MCF 10A (cell line): ENCODE measurements at regions of chr7 and their contacts with region 1.

Region 1: GRCh38 chr7:129218514-129219062 is 6.2 kb upstream of the AHCYL2 start:
- DNase-seq: peak; percentile 91
- H3K4me3 Mint-ChIP-seq: no peak overlapping the region
- H3K27ac Mint-ChIP-seq: no peak overlapping the region
- H3K4me1 Mint-ChIP-seq: no peaks in the 10 kb centered on the region
- H3K27me3 Mint-ChIP-seq: no peaks in the 10 kb centered on the region
- CTCF ChIP-seq: peak; percentile 85

Region 2: GRCh38 chr7:128247676-128248194 is 970.9 kb before region 1 on chr7:
- CTCF ChIA-PET with region 1: no interaction called
- POLR2A ChIA-PET with region 1: no interaction called
- intact Hi-C with region 1: no loop called
- DNase-seq: peak; percentile 58
- H3K4me3 Mint-ChIP-seq: no peak overlapping the region
- H3K27ac Mint-ChIP-seq: no peak overlapping the region
- H3K4me1 Mint-ChIP-seq: peaks cover 4% of the 10 kb centered on the region
- H3K27me3 Mint-ChIP-seq: no peaks in the 10 kb centered on the region
- CTCF ChIP-seq: no peak

Region 3: DNA sequence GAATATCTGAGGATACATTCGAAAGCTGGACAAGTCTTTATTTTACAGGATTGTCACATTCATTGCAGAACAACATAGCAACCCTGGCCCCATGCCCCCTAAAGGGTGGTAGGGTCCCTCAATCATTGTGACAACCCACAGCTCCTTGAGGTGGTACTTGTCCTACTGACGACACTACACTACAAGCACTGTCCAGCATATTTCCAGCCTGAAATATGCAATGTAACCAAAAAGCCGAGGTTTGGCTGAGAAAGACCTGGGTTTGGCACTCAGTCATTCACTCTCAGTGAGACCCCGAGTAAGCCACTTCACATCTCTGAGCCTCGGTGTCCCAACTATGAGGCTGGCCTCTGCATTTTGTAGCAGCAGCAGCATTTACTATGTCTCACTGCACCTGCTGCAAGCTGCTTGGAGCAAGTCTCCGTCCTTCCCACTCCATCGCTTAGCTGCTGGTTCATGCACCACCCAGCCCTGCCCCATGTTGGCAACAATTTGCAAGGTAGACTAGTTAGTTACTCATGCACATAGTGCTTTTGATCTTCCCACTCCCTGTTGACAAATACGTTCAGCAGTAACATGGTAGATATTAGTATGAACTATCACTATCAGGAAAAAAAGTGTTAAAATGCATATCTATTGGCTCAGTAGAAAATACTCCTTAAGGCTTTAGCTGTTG is 120.0 kb before region 1 on chr7:
- CTCF ChIA-PET with region 1: no interaction called
- POLR2A ChIA-PET with region 1: no interaction called
- intact Hi-C with region 1: no loop called
- DNase-seq: no peak
- H3K4me3 Mint-ChIP-seq: no peak overlapping the region
- H3K27ac Mint-ChIP-seq: no peak overlapping the region
- H3K4me1 Mint-ChIP-seq: no peaks in the 10 kb centered on the region
- H3K27me3 Mint-ChIP-seq: no peaks in the 10 kb centered on the region
- CTCF ChIP-seq: no peak

Region 4: DNA sequence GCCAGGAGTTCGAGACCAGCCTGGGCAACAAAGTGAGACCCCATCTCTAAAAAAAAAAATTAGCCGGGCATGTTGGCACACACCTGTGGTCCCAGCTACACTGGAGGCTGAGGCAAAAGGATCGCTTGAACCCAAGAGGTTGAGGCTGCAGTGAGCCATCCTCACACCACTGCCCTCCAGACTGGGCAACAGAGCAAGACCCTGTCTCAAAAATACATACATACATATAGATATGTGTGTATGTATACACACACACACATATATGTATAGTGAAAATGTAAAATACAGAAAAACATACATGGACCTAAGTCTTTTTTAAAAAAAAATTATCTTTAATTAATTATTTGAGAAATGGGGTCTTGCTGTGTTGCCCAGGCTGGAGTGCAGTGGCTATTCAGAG is 24.7 kb before region 1 on chr7:
- CTCF ChIA-PET with region 1: interaction called, 10 read pairs
- POLR2A ChIA-PET with region 1: no interaction called
- intact Hi-C with region 1: no loop called
- DNase-seq: no peak
- H3K4me3 Mint-ChIP-seq: no peak overlapping the region
- H3K27ac Mint-ChIP-seq: no peak overlapping the region
- H3K4me1 Mint-ChIP-seq: no peaks in the 10 kb centered on the region
- H3K27me3 Mint-ChIP-seq: peaks cover 56% of the 10 kb centered on the region
- CTCF ChIP-seq: no peak

Region 5: GRCh38 chr7:129285111-129285510 is 66.5 kb after region 1 on chr7:
- CTCF ChIA-PET with region 1: interaction called, 14 read pairs
- POLR2A ChIA-PET with region 1: interaction called, 3 read pairs
- intact Hi-C with region 1: no loop called
- DNase-seq: no peak
- H3K4me3 Mint-ChIP-seq: no peak overlapping the region
- H3K27ac Mint-ChIP-seq: no peak overlapping the region
- H3K4me1 Mint-ChIP-seq: peaks cover 6% of the 10 kb centered on the region
- H3K27me3 Mint-ChIP-seq: no peaks in the 10 kb centered on the region
- CTCF ChIP-seq: no peak

Region 6: GRCh38 chr7:129343099-129343700 is 124.6 kb after region 1 on chr7:
- CTCF ChIA-PET with region 1: interaction called, 13 read pairs
- POLR2A ChIA-PET with region 1: no interaction called
- intact Hi-C with region 1: no loop called
- DNase-seq: peak; percentile 53
- H3K4me3 Mint-ChIP-seq: no peak overlapping the region
- H3K27ac Mint-ChIP-seq: no peak overlapping the region
- H3K4me1 Mint-ChIP-seq: peaks cover 7% of the 10 kb centered on the region
- H3K27me3 Mint-ChIP-seq: no peaks in the 10 kb centered on the region
- CTCF ChIP-seq: peak; percentile 56

Region 7: DNA sequence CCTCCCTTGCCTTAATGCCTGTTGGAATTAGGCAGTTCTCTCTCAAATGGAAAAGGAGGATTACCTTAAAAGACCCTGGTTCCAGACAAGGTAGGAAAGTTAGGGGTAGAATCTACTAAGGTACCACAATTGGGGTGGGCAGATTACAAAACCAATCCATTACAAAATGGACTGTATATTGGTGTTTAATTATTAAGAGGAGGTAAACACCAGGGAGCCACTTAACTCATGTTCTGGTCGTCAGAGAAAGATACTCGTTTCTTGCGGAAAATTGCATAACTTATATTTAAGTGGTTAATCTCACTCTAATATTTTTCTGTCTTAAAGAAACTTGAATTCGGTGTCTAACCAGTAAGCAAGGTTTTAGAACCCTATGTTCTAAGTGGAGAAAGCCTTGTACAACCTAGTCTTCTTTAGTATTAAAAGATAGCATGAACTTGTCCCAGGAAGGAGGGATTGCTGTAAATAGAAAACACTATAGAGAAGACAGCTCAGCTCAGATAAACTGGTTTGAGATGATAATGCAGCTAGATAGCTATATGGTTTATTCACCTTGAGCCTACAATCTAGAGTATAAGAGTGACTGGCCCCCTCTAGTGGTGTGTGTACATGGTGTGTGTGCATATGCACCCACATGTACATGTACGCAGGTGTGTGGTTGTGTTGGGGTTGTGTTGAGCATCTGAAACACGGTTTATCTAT is 157.6 kb after region 1 on chr7:
- CTCF ChIA-PET with region 1: interaction called, 71 read pairs
- POLR2A ChIA-PET with region 1: no interaction called
- intact Hi-C with region 1: loop called (anchors 2 kb)
- DNase-seq: peak; percentile 64
- H3K4me3 Mint-ChIP-seq: no peak overlapping the region
- H3K27ac Mint-ChIP-seq: no peak overlapping the region
- H3K4me1 Mint-ChIP-seq: no peaks in the 10 kb centered on the region
- H3K27me3 Mint-ChIP-seq: no peaks in the 10 kb centered on the region
- CTCF ChIP-seq: peak; percentile 49

Region 8: DNA sequence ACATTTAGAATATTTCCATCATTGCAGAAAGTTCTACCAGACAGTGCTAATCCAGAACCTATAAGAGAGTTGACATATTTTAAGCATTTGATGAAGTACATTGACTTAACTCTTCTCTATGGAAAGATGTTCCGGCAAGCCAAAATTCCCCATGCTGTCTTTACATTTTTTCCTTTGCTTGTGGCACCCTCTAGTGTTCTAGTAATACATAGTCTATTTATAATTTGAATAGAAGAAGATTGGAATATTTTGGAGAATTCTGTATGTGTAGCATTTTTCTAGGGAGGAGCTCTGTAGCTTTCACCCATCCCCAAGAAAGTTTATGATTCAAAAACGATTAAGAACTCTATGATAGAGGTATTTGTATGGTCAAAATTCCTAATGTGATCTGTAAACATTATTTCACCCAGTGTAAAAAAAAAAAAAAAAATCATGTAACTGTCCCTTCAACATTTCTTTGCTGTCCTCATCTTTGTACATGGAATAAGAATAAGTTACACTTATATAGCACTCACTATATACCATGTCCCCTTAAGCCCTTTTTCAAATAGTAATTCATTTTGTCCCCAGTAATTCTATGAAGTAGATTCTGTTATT is 426.1 kb after region 1 on chr7:
- CTCF ChIA-PET with region 1: interaction called, 15 read pairs
- POLR2A ChIA-PET with region 1: no interaction called
- intact Hi-C with region 1: loop called (anchors 2 kb)
- DNase-seq: peak; percentile 62
- H3K4me3 Mint-ChIP-seq: no peak overlapping the region
- H3K27ac Mint-ChIP-seq: no peak overlapping the region
- H3K4me1 Mint-ChIP-seq: peaks cover 15% of the 10 kb centered on the region
- H3K27me3 Mint-ChIP-seq: no peaks in the 10 kb centered on the region
- CTCF ChIP-seq: peak; percentile 41